ENCODE measurements at regions of chr6 and their contacts with region 1.

Region 1: GRCh38 chr6:142395768-142396231 is 94.0 kb downstream of the ADGRG6 start:
- DNase-seq: no peak
- H3K4me3 ChIP-seq: no peak overlapping the region
- H3K27ac ChIP-seq: no peak overlapping the region
- H3K4me1 ChIP-seq: no peaks in the 10 kb centered on the region
- H3K27me3 ChIP-seq: no peaks in the 10 kb centered on the region
- CTCF ChIP-seq: no peak

Region 2: GRCh38 chr6:142112451-142113061 is 283.2 kb before region 1 on chr6:
- CTCF ChIA-PET with region 1: no interaction called
- dilution Hi-C with region 1: no loop called
- in situ Hi-C with region 1: no loop called
- intact Hi-C with region 1: no loop called
- DNase-seq: peak; percentile 48
- H3K4me3 ChIP-seq: no peak overlapping the region
- H3K27ac ChIP-seq: no peak overlapping the region
- H3K4me1 ChIP-seq: no peaks in the 10 kb centered on the region
- H3K27me3 ChIP-seq: no peaks in the 10 kb centered on the region
- CTCF ChIP-seq: peak; percentile 81 to 82

Region 3: DNA sequence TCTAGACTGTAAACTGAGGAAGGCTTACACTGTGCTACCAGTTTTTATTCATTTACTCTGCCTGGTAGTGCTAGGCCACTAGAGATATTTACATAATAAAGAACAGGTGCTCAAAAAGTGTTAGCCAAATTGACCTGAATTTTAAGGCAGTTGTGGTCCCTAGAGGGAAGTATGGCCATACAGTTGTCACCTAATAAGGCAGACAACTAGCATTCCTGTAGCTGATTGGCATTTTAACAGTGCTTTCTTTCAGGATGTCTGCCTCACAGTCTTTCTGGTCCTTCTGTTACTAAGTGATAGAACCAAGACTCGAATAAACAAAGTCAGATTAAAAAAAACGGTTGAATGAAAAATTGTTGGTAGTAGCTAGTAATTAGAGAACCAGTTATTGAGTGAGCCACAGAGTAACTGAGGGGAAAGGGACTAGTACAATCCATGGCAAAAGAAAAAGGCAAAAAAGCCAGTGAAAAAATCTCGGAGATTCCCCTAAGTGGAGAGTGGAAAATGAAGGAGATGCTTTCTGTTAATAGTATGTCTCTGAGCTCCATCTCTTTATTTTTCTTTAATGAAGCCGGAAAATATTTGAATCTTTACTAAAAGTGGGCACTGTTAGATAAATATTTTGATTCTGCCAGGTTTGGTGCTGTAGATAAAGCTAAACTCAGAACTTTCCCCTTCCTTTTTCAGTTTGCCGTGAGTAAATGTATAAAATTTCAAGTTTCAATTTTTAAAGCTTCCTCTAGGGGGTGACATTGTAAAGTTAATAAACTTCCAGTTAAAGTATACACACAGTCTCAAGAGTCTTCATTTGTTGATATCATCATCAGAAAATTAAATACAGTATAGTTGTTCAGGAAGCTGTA is 239.7 kb before region 1 on chr6:
- CTCF ChIA-PET with region 1: no interaction called
- dilution Hi-C with region 1: loop called (anchors 10 kb)
- in situ Hi-C with region 1: no loop called
- intact Hi-C with region 1: no loop called
- DNase-seq: no peak
- H3K4me3 ChIP-seq: peak overlapping the region in 1 of 3 experiments; percentile 13
- H3K27ac ChIP-seq: no peak overlapping the region
- H3K4me1 ChIP-seq: no peaks in the 10 kb centered on the region
- H3K27me3 ChIP-seq: no peaks in the 10 kb centered on the region
- CTCF ChIP-seq: peak; percentile 39 to 43

Region 4: DNA sequence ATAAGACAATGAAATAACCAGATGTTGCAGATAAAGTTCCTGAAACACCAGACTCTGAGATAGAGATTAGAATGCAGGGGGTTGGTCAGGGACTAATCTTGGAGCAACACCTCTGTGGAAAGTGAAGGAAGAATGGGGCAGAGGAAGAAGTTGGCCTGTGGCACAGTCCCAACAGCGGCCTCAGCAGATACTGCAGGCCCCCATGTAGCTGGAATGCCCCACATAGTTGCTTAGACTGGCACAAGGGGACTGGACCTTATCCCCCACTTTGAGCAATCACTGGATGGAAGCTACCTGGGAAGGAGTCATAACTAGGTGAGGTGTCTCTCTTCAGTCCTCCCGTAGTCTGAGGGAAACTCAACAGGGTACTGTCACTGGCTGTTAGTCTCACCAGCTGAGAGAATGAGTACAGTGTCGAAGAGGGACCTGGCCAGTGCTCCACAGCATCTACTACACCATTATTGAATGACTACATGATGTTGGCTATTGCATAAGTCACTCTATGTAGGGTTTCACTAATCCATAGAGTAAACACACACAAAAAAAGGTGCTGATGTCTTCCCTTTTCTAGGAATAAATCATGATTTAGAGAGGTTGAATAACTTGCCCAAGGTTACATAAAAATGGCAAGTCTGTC is 46.5 kb before region 1 on chr6:
- CTCF ChIA-PET with region 1: no interaction called
- dilution Hi-C with region 1: no loop called
- in situ Hi-C with region 1: no loop called
- intact Hi-C with region 1: no loop called
- DNase-seq: no peak
- H3K4me3 ChIP-seq: no peak overlapping the region
- H3K27ac ChIP-seq: no peak overlapping the region
- H3K4me1 ChIP-seq: no peaks in the 10 kb centered on the region
- H3K27me3 ChIP-seq: no peaks in the 10 kb centered on the region
- CTCF ChIP-seq: no peak

Region 5: GRCh38 chr6:142359271-142359960 is 36.4 kb before region 1 on chr6:
- CTCF ChIA-PET with region 1: no interaction called
- dilution Hi-C with region 1: no loop called
- in situ Hi-C with region 1: no loop called
- intact Hi-C with region 1: no loop called
- DNase-seq: no peak
- H3K4me3 ChIP-seq: no peak overlapping the region
- H3K27ac ChIP-seq: no peak overlapping the region
- H3K4me1 ChIP-seq: peaks cover 14% of the 10 kb centered on the region
- H3K27me3 ChIP-seq: no peaks in the 10 kb centered on the region
- CTCF ChIP-seq: no peak

Measured in mammary epithelial cell (primary cell).